Posterior vena cava (tissue), 2 donors: ENCODE measurements at regions of chr12 and their contacts with region 1.

Region 1: DNA sequence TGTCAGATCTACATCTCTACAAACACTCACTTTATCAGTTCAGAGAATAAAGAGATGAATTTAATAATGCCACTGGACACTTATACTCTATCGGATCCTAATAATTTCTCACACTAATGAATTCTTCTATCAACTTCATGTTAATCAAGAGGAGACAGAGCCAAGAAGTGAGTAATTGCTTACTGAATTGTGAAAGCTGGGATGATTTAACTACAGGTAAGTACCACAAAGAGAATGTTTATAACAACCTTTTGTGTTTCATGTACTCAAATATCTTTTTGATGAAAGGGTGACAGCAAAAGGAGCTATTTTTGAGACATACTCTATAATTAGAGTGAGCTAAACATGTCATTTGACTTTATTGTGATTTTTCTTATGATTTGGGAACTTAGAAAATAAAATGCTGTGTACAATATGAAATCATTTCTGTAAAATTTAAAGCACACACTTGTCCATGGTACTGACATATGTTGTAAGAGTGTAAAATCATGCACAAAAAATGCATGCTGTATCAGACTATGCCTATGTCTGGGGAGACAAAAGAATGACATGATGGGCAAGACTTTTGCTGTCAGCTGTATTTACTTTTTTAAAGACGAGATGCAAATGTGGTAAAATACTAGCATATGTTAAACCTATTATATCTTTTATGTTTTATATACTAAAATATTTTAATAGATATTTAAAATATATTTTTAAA is 361.2 kb downstream of the CCER1 start:
- DNase-seq: no peak

Region 2: GRCh38 chr12:90489141-90489540 is 104.6 kb before region 1 on chr12:
- intact Hi-C with region 1: no loop called
- DNase-seq: no peak

Region 3: DNA sequence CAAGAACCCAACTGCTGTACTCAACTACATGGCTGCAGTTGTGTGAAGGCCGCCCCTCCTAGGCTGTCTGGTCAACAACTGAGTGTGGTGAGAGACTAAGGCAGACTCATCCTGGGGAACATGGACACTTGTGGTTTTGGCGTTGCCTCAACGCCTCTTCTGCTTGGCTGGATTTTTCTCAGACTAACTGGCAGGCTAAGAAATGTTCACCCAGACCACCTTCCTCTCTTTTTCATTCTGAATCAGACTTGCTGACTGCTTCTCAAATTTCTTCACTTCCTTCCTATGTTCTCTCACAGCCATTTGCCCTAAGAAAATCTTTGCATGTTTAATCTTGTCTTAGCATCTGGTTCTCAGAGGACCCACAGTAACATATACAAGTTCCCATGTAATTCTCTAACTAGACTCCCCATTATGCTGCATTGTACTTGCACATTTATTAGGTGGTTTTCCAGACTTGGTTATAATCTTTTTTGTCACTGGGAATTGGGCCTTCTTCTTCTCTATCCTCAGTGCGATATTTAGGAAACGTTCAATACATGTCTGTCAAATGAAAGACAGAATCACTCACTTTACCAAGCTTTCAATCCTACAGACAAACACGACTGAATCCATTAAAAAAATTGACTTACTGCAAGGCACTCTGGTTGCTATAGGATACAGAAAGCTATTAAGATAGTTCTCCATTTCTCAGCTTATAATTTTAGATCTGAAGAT is 33.6 kb after region 1 on chr12:
- intact Hi-C with region 1: loop called in 1 of 2 experiments (anchors 1 kb)
- DNase-seq: no peak